Lower lobe of right lung (tissue), 2 donors: ENCODE measurements at regions of chr10 and their contacts with region 1.

Region 1: GRCh38 chr10:14093730-14094484 is 236.8 kb downstream of the FRMD4A start:
- DNase-seq: no peak
- ATAC-seq: peak; percentile 29 to 46
- H3K4me3 ChIP-seq: no peak overlapping the region
- H3K27ac ChIP-seq: no peak overlapping the region
- H3K4me1 ChIP-seq: peaks cover 6% of the 10 kb centered on the region
- H3K27me3 ChIP-seq: no peaks in the 10 kb centered on the region
- CTCF ChIP-seq: peak; percentile 47

Region 2: DNA sequence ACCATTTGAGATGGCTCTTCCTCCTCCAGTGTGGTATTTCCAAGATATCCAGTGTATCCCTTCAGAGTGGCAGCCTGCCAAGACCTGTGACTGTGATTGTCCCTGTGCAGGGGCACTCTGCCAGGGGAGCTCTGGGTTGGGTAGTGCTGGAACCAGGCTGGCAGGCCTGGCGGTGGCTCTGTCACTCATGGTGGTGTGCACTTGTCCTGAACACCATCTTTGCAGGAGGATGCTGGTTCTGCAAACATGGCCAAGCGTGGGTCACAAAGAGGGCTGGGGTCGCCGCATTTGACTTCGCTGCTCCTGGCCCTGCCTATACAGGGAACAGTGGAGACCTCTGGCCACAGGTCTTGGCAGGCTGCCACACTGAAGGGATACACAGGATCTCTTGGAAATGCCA is 301.9 kb before region 1 on chr10:
- intact Hi-C with region 1: loop called (anchors 10 kb)
- DNase-seq: no peak
- ATAC-seq: no peak
- H3K4me3 ChIP-seq: no peak overlapping the region
- H3K27ac ChIP-seq: no peak overlapping the region
- H3K4me1 ChIP-seq: peaks cover 23% of the 10 kb centered on the region
- H3K27me3 ChIP-seq: no peaks in the 10 kb centered on the region
- CTCF ChIP-seq: no peak

Region 3: DNA sequence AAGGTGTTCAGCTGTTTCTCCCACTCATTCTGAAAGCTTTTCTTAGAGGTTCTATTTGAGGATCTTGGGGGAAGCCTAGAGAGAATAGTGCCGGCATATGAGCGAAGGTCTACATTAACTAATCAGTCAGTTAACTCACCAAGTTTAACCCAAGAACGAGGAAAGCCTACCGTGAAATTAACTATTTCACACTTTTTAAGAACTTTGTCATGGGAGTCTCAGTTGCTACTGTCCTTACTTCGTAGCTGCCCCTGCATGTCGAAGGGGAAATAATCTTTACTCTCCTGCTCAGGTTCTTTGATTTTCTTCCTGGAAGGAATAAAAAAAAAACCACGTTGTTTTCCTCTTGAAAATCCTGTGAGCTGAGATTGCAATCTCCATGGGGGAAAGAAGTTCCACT is 121.7 kb after region 1 on chr10:
- intact Hi-C with region 1: no loop called
- DNase-seq: no peak
- ATAC-seq: no peak
- H3K4me3 ChIP-seq: no peak overlapping the region
- H3K27ac ChIP-seq: no peak overlapping the region
- H3K4me1 ChIP-seq: no peaks in the 10 kb centered on the region
- H3K27me3 ChIP-seq: no peaks in the 10 kb centered on the region
- CTCF ChIP-seq: no peak